Head of caudate nucleus (tissue), 42 donors: ENCODE measurements at regions of chr15 and their contacts with region 1.

Region 1: GRCh38 chr15:65530314-65531122 is at the start of gene HACD3:
- DNase-seq: peak; percentile 48 to 95 (median 90)

Region 2: DNA sequence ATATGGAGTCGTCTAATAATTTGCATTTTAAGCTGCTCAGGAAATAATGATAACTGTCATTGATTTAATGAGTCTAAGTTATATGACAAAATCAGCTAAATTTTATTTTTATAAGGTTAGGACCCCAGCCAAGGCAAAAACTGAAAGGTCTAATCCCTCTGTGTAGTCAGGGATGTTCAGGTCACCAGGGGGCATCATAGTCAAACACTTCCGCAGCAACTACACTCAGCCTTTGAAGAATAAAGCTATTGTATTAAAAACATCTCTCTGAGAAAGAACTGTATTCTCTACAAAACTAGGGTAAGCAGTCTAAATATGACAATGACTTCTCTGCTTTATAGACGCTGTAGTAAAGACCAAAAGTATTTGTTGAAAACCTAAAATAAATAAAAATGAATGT is 65.4 kb after region 1 on chr15:
- intact Hi-C with region 1: loop called (anchors 10 kb)
- DNase-seq: peak in 36 of 42 donors; percentile 18 to 87 (median 63)

Region 3: GRCh38 chr15:65666257-65666656 is 135.7 kb after region 1 on chr15:
- intact Hi-C with region 1: no loop called
- DNase-seq: peak in 6 of 42 donors; percentile 20 to 36 (median 28)

Region 4: GRCh38 chr15:65991721-65992483 is 461.4 kb after region 1 on chr15:
- intact Hi-C with region 1: no loop called
- DNase-seq: no peak